Right ventricle myocardium superior (tissue), 1 donor: ENCODE measurements at regions of chr11 and their contacts with region 1.

Region 1: GRCh38 chr11:123110356-123110755 is 48.4 kb upstream of the HSPA8 start:
- DNase-seq: no peak
- ATAC-seq: no peak

Region 2: DNA sequence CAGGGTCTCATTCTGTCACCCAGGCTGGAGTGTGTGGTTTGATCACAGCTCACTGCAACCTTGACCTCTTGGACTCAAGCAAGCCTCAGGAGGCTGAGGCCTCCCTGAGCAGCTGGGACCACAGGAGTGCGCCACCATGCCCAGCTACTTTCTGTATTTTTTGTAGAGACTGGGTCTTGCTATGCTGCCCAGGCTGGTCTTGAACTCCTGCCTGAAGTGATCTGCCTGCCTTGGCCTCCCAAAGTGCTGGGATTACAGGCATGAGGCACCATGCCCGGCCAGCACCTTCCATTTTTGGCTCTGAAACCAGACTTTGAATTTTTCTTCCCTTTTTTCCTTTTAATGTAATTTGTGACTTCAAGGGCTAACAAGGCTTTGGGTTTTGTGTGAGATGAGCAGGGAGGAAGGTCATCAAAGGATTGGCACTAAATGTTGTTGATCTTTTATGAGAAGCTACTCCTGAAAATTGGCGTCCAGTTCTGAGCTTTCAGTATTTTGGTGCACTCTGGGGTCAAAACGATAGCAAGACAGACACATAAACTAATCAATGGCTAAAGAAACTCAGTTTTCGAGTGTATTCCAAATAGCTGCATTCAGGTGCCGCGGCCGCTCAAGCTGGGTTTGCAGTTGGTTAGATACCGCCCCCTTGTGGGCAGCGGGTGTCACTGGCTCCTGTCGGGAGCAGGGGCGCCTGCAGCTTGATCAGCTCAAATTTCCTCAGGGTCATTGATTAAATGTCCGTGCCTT is 136.6 kb after region 1 on chr11:
- intact Hi-C with region 1: loop called (anchors 2 kb)
- DNase-seq: peak; percentile 88
- ATAC-seq: peak; percentile 88